Activated naive CD4-positive, alpha-beta T cell treated with anti-CD3 and anti-CD28 coated beads for 36 hours (primary cell): ENCODE measurements at regions of chr10 and their contacts with region 1.

Region 1: GRCh38 chr10:86710987-86711512 is 42.7 kb downstream of the LDB3 start:
- DNase-seq: peak; percentile 86
- H3K4me3 Mint-ChIP-seq: peak overlapping the region; percentile 87
- H3K27ac Mint-ChIP-seq: peak overlapping the region; percentile 93
- H3K4me1 Mint-ChIP-seq: peaks cover 14% of the 10 kb centered on the region
- H3K27me3 Mint-ChIP-seq: no peaks in the 10 kb centered on the region

Region 2: DNA sequence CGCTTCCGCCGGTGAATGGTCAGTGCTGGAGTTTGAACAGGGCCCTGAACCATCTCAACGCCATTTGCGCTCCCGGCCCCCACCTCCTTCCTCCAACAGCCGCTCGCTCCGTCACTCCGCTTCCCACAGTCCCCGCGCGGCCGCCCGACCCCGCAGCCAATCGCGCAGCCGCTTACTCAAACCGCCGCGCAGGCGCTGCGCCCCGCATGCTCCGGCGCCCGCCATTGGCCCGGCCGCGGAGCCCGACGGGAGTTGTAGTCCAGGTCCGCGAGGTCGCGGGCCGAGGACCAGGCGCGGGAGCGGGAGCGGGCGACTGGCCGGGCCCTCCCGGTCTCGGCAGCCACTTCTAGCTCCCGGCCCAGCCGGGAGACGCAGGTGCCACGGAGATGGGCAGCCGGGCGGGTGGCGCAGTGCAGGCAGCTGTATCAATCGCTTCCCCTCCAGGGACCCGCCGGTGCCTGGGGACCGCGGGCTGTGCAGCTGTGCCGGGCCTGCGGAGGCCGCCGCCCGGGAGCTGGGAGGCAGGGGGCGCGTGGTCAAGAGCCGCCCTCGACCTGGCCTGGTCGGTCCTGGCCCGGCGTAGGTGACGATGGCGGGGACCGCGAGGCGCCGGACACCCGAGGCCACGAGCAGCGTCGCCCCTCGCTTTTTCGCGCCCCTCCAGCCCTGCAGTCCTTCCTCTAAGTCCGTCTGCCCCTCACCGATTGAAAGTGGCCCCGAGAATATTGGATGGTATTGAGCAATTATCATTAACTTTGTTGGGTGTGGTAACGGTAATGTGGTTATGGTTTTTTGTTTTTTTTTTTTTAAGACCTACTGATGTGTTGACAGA is 189.2 kb before region 1 on chr10 and contains the start of gene WAPL:
- CTCF ChIA-PET with region 1: no interaction called
- intact Hi-C with region 1: loop called (anchors 5 kb)
- DNase-seq: peak; percentile 95
- H3K4me3 Mint-ChIP-seq: peak within 1 kb of the TSS; percentile 99
- H3K27ac Mint-ChIP-seq: peak within 1 kb of the TSS; percentile 89
- H3K4me1 Mint-ChIP-seq: peaks cover 57% of the 10 kb centered on the region
- H3K27me3 Mint-ChIP-seq: no peaks in the 10 kb centered on the region
- total RNA-seq, gene WAPL: 30.2 to 33.5 TPM

Region 3: GRCh38 chr10:86755740-86756510 is 44.9 kb after region 1 on chr10:
- CTCF ChIA-PET with region 1: interaction called, 4 read pairs
- intact Hi-C with region 1: loop called (anchors 1 kb)
- DNase-seq: peak; percentile 86
- H3K4me3 Mint-ChIP-seq: peak overlapping the region; percentile 76
- H3K27ac Mint-ChIP-seq: no peak overlapping the region
- H3K4me1 Mint-ChIP-seq: peaks cover 28% of the 10 kb centered on the region
- H3K27me3 Mint-ChIP-seq: peaks cover 31% of the 10 kb centered on the region

Region 4: DNA sequence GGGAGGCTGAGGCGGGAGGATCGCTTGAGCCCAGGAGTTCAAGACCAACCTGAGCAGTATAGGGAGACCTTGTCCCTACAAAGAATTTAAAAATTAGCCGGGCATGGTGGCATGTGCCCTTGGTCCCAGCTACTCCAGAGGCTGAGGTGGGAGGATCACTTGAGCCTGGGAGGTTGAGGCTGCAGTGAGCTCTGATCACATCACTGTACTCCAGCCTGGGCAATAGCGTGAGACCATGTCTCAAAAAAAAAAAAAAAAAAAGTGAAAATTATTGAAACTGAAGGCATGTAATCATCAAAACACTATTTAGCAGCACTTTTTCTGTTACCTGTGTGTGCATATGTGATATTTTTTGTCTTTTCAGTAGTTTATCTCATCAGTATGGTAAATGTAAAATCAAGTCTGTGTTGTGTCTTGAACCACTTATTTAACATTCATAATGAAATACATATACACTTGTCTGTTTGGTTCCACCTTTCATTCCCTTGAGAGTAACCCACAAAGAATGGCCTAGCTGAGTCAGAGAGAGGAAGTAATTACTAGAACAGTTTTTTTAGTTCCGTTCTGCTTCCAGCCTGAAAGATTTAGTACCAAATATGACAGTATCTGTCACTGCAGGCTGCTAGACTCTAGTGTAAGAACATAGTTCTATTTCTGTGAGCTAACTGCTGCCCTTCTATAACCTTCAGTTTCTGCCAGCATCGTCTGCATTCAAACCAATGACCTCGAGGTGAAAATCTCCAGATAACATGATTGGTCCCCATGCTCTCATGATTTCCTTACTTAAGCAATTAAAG is 177.7 kb after region 1 on chr10:
- CTCF ChIA-PET with region 1: no interaction called
- intact Hi-C with region 1: loop called (anchors 1 kb)
- DNase-seq: peak; percentile 8
- H3K4me3 Mint-ChIP-seq: no peak overlapping the region
- H3K27ac Mint-ChIP-seq: no peak overlapping the region
- H3K4me1 Mint-ChIP-seq: peaks cover 6% of the 10 kb centered on the region
- H3K27me3 Mint-ChIP-seq: no peaks in the 10 kb centered on the region

Region 5: DNA sequence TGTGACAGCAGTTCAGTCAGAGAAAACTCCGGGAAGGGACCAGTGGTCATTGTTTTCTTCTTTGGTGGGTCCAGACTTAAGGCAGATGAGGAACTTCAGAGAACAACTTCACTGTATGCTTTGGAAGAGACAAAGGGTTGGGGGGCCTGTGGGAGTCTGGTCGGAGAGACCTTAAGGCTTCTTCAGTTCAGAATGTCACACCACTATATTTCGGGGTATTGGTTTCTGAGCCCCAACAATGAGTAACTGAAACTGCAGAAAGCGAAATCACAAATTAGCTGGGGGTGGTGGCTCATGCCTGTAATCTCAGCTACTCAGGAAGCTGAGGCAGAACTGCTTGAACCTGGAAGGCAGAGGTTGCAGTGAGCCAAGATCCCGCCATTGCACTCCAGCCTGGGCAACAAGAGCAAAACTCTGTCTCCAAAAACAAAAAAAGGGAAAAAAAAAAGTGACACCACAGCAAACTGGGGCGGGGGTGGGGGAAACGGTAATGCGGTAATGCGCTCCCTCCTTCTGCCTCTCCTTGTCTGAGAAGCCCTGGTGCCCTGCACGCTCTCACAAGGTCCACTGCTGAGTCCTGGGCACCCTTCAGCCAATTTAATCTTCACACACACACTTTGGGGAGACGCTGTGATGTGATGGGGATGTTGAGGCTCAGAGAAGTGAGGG is 255.1 kb after region 1 on chr10:
- CTCF ChIA-PET with region 1: interaction called, 4 read pairs
- intact Hi-C with region 1: loop called (anchors 1 kb)
- DNase-seq: peak; percentile 51
- H3K4me3 Mint-ChIP-seq: peak overlapping the region; percentile 54
- H3K27ac Mint-ChIP-seq: peak overlapping the region; percentile 77
- H3K4me1 Mint-ChIP-seq: peaks cover 39% of the 10 kb centered on the region
- H3K27me3 Mint-ChIP-seq: no peaks in the 10 kb centered on the region